ENCODE measurements at regions of chr13 and their contacts with region 1.

Region 1: GRCh38 chr13:99322297-99323103 is 15.3 kb upstream of the GPR183 start:
- DNase-seq: peak; percentile 63
- H3K4me3 Mint-ChIP-seq: peak overlapping the region; percentile 56
- H3K27ac Mint-ChIP-seq: peak overlapping the region; percentile 87
- H3K4me1 Mint-ChIP-seq: peaks cover 75% of the 10 kb centered on the region
- H3K27me3 Mint-ChIP-seq: no peaks in the 10 kb centered on the region

Region 2: DNA sequence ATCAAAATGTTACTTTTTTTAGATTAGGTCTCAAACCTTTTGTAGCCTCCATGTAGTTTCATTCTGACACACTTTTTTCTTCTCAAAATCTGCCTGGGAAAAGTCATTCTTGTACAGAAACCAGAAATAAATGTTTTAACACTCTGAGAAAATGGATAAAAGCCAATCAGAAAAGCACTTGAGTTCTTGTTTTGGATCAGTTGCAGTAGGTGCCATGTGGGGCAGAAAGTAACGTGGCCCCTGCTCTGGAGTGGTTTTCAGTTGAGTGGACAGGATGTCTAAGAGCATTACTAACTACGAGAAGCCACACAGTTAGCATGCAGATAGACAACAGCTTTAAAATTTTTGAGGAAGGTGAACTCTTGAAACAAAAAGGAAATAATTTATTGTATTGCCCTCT is 34.4 kb before region 1 on chr13:
- CTCF ChIA-PET with region 1: interaction called, 4 read pairs
- intact Hi-C with region 1: loop called (anchors 2 kb)
- DNase-seq: peak; percentile 89
- H3K4me3 Mint-ChIP-seq: peak overlapping the region; percentile 37
- H3K27ac Mint-ChIP-seq: peak overlapping the region; percentile 89
- H3K4me1 Mint-ChIP-seq: peaks cover 80% of the 10 kb centered on the region
- H3K27me3 Mint-ChIP-seq: no peaks in the 10 kb centered on the region

Region 3: DNA sequence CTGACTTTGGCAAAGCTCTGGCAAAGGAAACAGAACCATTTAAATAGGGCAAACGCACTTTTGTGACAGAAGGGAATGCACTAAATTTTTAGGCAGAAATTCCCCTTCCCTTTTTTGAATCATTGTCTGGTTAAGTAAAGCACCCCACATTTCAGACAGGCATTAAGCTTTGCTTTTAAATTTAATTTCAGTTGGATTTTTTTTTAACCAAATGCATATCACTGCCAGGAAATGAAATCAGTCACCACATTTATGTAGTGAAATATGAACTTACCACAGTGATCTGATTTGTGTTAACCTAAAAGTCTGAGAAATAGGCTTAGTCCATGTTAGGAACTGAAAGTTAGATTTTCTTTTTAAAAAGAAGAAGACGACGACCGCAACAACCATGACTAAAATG is 26.1 kb before region 1 on chr13:
- CTCF ChIA-PET with region 1: interaction called, 4 read pairs
- intact Hi-C with region 1: loop called (anchors 1 kb)
- DNase-seq: no peak
- H3K4me3 Mint-ChIP-seq: peak overlapping the region; percentile 48
- H3K27ac Mint-ChIP-seq: peak overlapping the region; percentile 87
- H3K4me1 Mint-ChIP-seq: peaks cover 75% of the 10 kb centered on the region
- H3K27me3 Mint-ChIP-seq: no peaks in the 10 kb centered on the region

Region 4: DNA sequence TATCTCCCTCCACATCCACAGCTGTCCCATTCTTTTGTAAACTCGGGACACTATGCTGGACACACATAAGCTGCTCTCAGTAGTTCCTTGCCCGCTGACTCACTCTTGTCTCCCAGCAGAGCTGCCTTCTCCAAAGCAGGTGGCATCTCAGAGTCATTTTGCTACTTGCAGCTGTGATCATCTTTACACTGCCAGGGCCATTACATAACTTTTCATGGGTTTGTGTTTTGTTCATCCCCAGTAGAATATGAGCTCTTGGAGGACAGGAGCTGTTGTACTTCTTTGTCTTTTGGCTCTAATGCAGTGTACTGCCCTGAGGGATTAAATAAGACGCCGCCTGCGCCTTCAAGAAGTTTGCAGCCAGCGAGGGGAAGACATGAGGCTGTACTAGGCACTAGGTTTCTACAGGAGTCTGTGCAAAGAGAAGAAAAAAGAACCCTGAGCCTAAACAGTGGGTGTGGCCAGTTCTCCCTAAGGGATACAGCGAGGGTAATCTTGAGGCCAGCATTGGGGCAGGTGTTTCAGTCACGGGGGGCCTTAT is 25.5 kb after region 1 on chr13:
- CTCF ChIA-PET with region 1: interaction called, 15 read pairs
- intact Hi-C with region 1: loop called (anchors 1 kb)
- DNase-seq: peak; percentile 56
- H3K4me3 Mint-ChIP-seq: no peak overlapping the region
- H3K27ac Mint-ChIP-seq: peak overlapping the region; percentile 6
- H3K4me1 Mint-ChIP-seq: peaks cover 64% of the 10 kb centered on the region
- H3K27me3 Mint-ChIP-seq: no peaks in the 10 kb centered on the region

Region 5: DNA sequence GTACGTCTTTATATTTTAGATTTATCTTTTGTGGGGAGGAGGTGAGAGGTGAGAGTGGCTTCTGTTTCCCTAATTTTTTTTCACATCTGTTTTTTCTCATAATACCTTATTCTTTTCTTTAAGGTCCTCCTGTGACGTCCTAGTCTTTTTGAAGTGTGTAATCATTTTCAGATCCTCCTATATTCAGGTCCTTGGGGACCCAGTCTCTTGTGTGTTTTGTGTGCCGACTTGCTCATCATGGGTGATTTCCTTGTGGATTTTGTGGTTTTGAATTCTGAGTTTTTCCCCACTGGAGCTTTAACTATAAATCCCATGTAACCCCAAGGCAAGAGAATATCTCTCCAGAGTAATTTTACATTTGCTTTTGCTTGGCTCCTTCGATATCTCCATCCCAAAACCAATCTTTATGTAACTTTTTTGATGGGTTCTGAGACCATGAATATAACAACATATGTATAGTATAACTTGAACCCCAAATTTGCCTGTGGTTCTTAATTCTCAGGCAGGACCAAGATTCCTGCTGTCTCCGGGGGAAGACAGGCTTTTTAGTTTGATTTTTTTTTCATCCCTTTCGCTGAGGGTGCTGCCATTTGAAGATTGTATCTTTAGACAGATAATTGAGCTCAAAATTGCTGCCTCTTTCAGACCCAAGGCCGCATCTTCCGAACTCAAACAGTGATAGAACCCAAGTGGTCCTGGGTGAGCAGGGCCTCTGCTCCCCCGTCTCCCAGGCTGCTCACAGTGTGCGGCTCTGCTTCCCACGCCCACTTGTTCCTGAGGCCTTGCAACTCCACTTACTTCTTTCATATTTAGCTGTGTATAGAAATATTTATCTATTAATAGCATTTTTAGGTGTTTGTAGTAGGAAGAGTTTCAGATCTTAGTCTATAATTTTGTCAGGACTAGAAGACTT is 43.8 kb after region 1 on chr13:
- CTCF ChIA-PET with region 1: interaction called, 3 read pairs
- intact Hi-C with region 1: loop called (anchors 1 kb)
- DNase-seq: peak; percentile 28
- H3K4me3 Mint-ChIP-seq: peak overlapping the region; percentile 17
- H3K27ac Mint-ChIP-seq: peak overlapping the region; percentile 48
- H3K4me1 Mint-ChIP-seq: peaks cover 87% of the 10 kb centered on the region
- H3K27me3 Mint-ChIP-seq: no peaks in the 10 kb centered on the region

Region 6: DNA sequence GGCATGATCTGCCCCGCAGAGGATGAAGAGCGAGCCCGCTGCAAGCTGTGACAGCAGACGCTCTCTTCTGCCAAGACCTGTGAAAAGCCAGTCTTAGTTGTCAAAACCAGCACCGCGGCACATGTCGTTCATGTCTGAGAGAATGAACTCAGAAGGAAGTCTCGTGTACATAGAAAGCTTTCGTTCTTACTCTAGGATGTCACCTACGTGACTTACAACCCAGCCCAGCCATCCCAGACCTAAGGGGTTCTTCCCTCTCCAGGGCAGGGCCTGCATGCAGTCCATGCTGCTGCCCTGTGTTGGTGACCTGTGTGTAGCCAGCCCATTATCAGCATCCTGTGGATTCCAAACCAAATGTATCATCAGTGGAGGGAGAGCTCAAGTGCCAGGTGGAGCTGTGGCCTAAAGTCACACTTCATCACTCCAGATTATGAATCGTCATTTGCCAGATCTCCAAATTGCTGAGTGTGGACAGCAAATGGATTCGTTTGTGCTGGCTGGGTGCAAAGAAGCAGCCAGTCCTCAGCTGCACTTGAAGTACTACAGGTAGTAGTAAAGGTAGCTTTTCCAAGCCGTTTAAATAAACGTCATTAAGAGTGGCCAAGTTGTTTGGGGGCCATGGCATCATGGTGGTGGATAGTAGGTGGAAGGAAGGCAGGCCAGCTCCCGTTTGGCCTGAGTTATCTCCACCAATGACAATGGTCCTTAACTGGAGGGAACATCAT is 58.6 kb after region 1 on chr13:
- CTCF ChIA-PET with region 1: interaction called, 9 read pairs
- intact Hi-C with region 1: loop called (anchors 1 kb)
- DNase-seq: peak; percentile 91
- H3K4me3 Mint-ChIP-seq: no peak overlapping the region
- H3K27ac Mint-ChIP-seq: peak overlapping the region; percentile 79
- H3K4me1 Mint-ChIP-seq: peaks cover 84% of the 10 kb centered on the region
- H3K27me3 Mint-ChIP-seq: no peaks in the 10 kb centered on the region

Region 7: DNA sequence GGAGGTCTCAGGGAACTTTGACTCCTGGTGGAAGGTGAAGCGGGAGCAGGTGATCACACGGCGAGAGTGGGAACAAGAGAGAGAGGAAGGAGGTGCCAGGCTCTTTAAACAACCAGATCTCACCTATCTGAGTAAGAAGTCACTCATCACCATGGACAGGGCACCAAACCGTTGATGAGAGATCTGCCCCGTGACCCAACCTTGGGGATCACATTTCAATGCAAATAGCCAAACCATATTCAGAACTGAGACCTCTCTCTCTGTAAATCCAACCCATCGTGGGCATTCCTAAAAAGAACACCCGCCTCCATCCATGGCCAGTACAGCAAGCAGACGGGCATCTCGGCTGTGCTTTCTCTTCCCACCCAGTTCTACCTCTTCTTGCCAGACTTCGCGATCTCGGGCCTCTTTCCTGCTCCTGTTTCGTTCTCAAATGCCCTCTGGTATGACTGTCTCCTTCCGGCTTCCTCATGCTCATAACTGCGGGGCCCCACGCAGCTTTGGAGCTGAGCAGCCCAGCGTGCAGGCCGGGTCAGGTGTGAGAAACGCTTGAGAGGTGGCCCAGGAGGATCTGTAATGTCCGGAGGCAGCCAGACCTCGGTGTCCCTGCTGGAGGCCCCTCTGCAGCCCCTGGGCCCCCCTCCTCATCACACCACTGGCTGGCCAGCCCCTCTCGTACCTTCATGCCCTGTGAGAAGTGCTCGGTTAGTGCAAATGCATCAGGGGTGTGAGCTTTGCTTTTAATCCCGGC is 81.7 kb after region 1 on chr13:
- CTCF ChIA-PET with region 1: no interaction called
- intact Hi-C with region 1: no loop called
- DNase-seq: no peak
- H3K4me3 Mint-ChIP-seq: no peak overlapping the region
- H3K27ac Mint-ChIP-seq: no peak overlapping the region
- H3K4me1 Mint-ChIP-seq: peaks cover 51% of the 10 kb centered on the region
- H3K27me3 Mint-ChIP-seq: no peaks in the 10 kb centered on the region

Region 8: GRCh38 chr13:99425485-99426341 is 103.2 kb after region 1 on chr13:
- CTCF ChIA-PET with region 1: no interaction called
- intact Hi-C with region 1: loop called (anchors 1 kb)
- DNase-seq: peak; percentile 84
- H3K4me3 Mint-ChIP-seq: peak overlapping the region; percentile 74
- H3K27ac Mint-ChIP-seq: peak overlapping the region; percentile 97
- H3K4me1 Mint-ChIP-seq: peaks cover 63% of the 10 kb centered on the region
- H3K27me3 Mint-ChIP-seq: no peaks in the 10 kb centered on the region

Region 9: GRCh38 chr13:99847318-99847750 is 524.8 kb after region 1 on chr13:
- CTCF ChIA-PET with region 1: no interaction called
- intact Hi-C with region 1: no loop called
- DNase-seq: no peak
- H3K4me3 Mint-ChIP-seq: no peak overlapping the region
- H3K27ac Mint-ChIP-seq: no peak overlapping the region
- H3K4me1 Mint-ChIP-seq: no peaks in the 10 kb centered on the region
- H3K27me3 Mint-ChIP-seq: no peaks in the 10 kb centered on the region

Region 10: DNA sequence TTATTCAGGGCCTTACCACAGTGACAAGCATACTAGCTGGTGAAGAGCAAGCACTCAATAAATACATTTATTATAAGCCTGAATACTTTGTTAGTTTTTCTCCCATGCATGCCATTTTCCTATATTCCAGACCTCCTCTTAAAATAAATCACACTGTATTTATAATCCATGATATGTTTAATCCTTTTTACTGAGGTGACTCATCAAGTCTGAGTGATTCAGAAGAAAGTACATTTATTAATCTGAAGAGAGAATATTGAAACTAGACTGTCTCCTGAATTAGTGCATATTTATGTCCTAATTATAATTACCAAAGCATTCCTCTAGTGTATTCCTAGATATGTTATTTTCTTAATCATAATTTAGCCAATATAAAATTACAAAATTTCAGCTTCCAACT is 1770.5 kb after region 1 on chr13:
- CTCF ChIA-PET with region 1: no interaction called
- intact Hi-C with region 1: no loop called
- DNase-seq: no peak
- H3K4me3 Mint-ChIP-seq: no peak overlapping the region
- H3K27ac Mint-ChIP-seq: no peak overlapping the region
- H3K4me1 Mint-ChIP-seq: no peaks in the 10 kb centered on the region
- H3K27me3 Mint-ChIP-seq: peaks cover 8% of the 10 kb centered on the region

Measured in activated naive CD4-positive, alpha-beta T cell treated with anti-CD3 and anti-CD28 coated beads for 36 hours (primary cell).